PC-9 (cell line): ENCODE measurements at regions of chr19 and their contacts with region 1.

Region 1: DNA sequence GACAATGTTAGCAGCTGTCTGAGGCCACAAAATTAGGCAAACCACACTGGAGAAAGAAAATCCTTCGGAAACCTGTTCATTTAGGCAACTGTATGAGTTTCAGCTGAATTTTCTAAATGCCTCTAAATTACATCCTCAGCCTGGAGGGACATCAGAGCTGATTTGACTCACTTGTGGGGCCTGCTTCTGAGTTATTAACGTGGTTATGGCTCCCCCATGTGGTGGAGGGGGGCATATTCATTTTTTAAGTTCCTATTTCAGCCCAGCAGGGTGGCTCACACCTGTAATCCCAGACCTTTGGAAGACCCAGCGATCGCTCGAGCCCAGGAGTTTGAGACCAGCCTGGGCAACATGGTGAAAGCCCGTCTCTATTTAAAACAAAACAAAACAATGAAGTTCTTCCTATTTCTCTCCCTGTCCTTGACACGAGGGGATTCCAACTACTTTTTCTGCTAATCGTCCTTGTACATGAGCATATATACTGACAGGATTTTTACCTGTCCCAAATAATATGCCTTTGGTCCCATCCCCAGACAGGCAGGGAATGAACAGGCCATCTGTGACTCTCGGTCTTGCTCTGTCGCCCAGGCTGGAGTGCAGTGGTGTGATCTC is 31.5 kb upstream of the HIF3A start:
- DNase-seq: peak; percentile 77 to 82
- H3K4me3 ChIP-seq: no peak overlapping the region
- H3K27ac ChIP-seq: no peak overlapping the region
- H3K4me1 ChIP-seq: peaks cover 40% of the 10 kb centered on the region
- H3K27me3 ChIP-seq: no peaks in the 10 kb centered on the region
- CTCF ChIP-seq: peak; percentile 96

Region 2: DNA sequence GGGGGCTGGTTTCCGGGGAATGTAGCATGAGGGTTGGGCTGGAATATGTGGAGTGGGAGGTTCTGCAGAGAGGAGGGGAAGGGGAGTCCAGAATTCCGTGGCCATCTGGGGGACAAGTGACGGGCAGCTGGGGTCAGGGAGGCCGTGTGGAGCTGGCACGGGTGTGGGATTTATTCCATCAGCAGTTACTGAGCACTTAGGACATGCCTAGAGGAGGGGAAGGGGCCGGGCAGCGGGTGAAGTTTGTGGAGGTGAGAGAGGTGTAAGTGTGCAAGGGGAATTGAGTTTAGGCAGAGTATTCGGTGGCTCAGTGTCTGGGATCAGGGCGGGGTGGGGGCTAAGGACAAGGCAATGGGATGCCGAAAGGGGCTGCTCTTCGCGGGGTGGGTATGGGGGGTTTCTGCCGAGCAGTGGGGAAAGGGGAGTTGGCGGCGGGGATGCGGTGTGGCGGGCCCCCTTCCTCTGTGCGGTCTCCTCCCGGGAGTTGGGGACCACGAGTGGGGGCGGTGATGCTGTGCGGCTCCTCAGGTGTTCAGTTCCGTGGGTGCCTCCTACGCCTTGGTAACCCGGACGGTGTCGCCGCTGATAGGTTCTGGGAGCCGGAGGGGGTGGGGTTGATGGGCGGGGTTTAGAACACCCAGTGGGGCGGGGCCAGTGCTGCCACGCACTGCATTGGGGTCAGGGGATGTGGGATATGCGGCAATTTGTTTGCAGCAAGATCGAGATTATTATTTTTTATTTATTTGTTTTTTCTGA is 264.7 kb before region 1 on chr19:
- CTCF ChIA-PET with region 1: no interaction called
- POLR2A ChIA-PET with region 1: no interaction called
- intact Hi-C with region 1: no loop called
- DNase-seq: no peak
- H3K4me3 ChIP-seq: no peak overlapping the region
- H3K27ac ChIP-seq: no peak overlapping the region
- H3K4me1 ChIP-seq: peaks cover 5% of the 10 kb centered on the region
- H3K27me3 ChIP-seq: no peaks in the 10 kb centered on the region
- CTCF ChIP-seq: no peak

Region 3: DNA sequence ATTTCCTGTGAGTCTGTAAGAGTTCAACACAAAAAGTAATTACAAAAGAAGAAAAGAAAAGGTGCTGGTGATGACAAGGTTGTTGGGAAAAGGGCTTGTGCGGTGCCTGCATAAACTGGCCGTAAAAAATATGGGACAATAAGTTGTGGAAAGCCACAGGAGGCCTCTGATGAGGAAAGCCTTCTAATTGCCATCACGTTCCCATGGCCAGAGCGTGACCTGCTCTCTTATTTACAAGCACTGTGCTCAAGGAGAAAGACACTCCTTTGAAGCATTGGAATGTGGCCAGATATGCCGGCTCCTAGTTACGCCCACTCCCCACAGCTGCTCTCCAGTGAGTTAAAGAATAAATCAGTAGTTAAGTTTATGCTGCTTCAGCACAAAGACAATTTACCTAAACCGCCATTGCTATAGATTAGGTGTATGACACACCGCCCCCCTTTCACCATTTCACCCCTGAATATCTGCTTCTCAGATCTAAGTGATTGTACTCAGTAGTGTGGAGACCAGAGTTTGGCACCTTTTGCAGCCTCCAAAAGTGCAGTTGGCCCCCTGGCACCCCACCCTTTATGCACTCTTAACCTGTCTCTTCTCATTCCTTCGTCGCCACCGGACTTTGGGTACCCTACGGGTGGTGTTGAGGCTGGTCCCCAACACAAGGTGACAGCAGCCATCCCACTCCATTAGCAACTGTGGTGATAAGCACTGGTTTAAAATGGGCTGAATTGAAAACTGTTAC is 234.3 kb before region 1 on chr19:
- CTCF ChIA-PET with region 1: interaction called, 3 read pairs
- POLR2A ChIA-PET with region 1: interaction called, 5 read pairs
- intact Hi-C with region 1: loop called (anchors 2 kb)
- DNase-seq: no peak
- H3K4me3 ChIP-seq: no peak overlapping the region
- H3K27ac ChIP-seq: no peak overlapping the region
- H3K4me1 ChIP-seq: no peaks in the 10 kb centered on the region; the same call in 1 of the 2 replicates
- H3K27me3 ChIP-seq: no peaks in the 10 kb centered on the region
- CTCF ChIP-seq: no peak

Region 4: GRCh38 chr19:46181388-46181779 is 83.9 kb before region 1 on chr19:
- CTCF ChIA-PET with region 1: interaction called, 14 read pairs
- POLR2A ChIA-PET with region 1: no interaction called
- intact Hi-C with region 1: no loop called
- DNase-seq: peak in 1 of 2 experiments; percentile 73
- H3K4me3 ChIP-seq: peak overlapping the region; percentile 8; the same call in 1 of the 2 replicates
- H3K27ac ChIP-seq: peak overlapping the region; percentile 74
- H3K4me1 ChIP-seq: peaks cover 36% of the 10 kb centered on the region
- H3K27me3 ChIP-seq: no peaks in the 10 kb centered on the region
- CTCF ChIP-seq: no peak

Region 5: GRCh38 chr19:46201413-46202310 is 63.7 kb before region 1 on chr19:
- CTCF ChIA-PET with region 1: interaction called, 4 read pairs
- POLR2A ChIA-PET with region 1: no interaction called
- intact Hi-C with region 1: loop called (anchors 1 kb)
- DNase-seq: peak; percentile 78 to 90
- H3K4me3 ChIP-seq: peak overlapping the region; percentile 65
- H3K27ac ChIP-seq: peak overlapping the region; percentile 97
- H3K4me1 ChIP-seq: peaks cover 85% of the 10 kb centered on the region
- H3K27me3 ChIP-seq: no peaks in the 10 kb centered on the region
- CTCF ChIP-seq: no peak

Region 6: DNA sequence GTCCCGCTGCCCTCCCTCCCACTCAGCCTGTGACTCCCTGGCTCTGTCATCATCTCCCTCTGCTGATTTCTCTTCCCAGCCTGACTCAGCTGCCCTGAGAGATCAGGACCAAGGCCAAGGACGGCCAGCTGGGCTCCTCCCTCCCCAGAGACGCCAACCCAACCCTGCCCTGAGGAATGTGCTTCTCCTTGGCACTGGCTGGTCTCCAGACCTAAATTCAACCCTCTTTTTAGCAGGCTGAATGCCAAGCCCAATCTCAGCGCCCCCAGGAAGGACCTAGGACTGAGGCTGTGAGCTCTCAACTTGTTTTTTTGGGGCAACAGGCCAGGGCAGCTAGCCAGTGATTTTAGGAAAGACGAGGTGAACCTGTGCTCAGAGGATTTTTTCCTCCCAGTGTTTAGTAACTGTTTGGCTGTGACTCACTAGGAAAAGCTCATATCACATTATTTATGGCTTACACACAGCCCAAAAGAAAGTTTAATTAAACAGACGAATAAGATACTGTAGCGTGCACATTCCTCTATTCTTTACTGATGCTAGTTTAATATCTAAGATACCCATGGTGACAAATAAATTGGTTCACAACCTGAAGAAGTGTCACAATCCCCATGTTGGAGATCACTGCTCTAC is 43.2 kb before region 1 on chr19:
- CTCF ChIA-PET with region 1: no interaction called
- POLR2A ChIA-PET with region 1: interaction called, 4 read pairs
- intact Hi-C with region 1: loop called (anchors 2 kb)
- DNase-seq: peak; percentile 95 to 99
- H3K4me3 ChIP-seq: no peak overlapping the region
- H3K27ac ChIP-seq: peak overlapping the region; percentile 84
- H3K4me1 ChIP-seq: peaks cover 66% of the 10 kb centered on the region
- H3K27me3 ChIP-seq: no peaks in the 10 kb centered on the region
- CTCF ChIP-seq: no peak

Region 7: DNA sequence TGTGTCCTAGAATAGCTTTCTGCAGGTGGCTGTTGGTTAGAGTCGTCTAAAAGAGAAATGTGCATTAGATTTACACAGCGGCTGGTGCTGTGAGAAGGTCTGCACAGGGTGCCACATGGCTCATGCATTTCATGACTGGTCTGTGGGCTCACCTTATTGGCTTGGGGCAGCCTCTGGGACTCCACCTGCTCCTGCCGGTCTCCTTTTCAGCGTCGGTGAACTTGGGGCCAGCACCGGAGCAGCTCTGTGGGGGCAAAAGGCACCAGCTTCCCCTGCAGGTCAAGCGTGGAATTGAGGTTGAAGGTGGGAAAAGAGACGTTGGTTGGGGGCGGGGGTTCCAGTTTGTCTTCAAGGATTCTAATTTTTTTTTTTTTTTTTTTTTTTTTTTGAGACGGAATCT is 166.5 kb after region 1 on chr19:
- CTCF ChIA-PET with region 1: interaction called, 15 read pairs
- POLR2A ChIA-PET with region 1: no interaction called
- intact Hi-C with region 1: no loop called
- DNase-seq: no peak
- H3K4me3 ChIP-seq: no peak overlapping the region
- H3K27ac ChIP-seq: no peak overlapping the region
- H3K4me1 ChIP-seq: no peaks in the 10 kb centered on the region
- H3K27me3 ChIP-seq: peaks cover 83% of the 10 kb centered on the region
- CTCF ChIP-seq: peak; percentile 23; the same call in 1 of the 2 replicates